ENCODE measurements at regions of chr6 and their contacts with region 1.

Region 1: DNA sequence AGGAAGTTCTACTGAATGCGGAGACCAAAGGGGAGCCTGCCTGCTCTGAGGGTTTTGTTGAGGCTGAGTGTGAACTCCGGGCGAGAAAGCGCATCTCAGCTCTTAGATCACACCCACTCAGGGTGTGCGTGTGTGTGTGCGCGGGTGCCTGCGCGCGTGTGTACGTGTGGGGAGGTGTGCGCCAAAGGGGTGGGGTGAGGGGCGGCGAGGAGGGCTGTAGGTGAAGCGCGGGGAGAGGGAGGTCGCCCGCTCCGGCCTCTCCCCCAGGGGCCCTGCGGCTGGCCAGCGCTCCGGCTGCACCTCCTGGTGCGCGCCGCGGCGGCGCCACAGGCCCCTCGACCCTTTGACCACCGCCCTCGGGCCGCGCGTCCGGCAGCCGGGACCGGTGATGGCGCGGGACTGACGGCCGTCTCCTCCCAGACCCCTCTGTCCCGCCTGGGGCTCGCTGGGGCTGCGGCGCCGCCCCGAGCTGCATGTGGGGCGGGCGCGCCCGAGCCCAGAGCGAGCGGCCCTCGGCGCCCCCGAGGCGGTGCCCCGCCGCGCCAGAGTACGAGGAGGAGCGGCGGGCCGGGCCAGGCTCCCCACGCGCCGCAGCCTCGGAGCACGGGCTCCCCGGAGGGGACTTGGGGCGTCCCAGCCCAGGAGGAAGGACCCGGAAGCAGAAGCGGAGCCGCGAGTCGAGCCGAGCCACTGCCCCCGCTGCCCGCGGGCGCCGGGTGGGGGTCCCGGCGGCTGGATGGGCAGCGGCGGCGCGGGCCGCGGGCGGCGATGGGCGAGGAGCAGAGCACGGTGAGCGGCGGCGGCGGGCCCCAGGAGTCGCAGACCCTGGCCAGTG is at the start of gene RNF217:
- DNase-seq: peak; percentile 27
- ATAC-seq: peak; percentile 50
- H3K4me3 ChIP-seq: peak within 1 kb of the TSS; percentile 76
- H3K27ac ChIP-seq: peak within 1 kb of the TSS; percentile 28
- H3K4me1 ChIP-seq: peaks cover 37% of the 10 kb centered on the region
- H3K27me3 ChIP-seq: no peaks in the 10 kb centered on the region
- CTCF ChIP-seq: no peak
- total RNA-seq, gene RNF217: 4.5 and 7.7 TPM in 2 replicates

Region 2: GRCh38 chr6:124903791-124904190 is 58.2 kb before region 1 on chr6:
- CTCF ChIA-PET with region 1: no interaction called
- POLR2A ChIA-PET with region 1: no interaction called
- intact Hi-C with region 1: no loop called
- DNase-seq: no peak
- ATAC-seq: no peak
- H3K4me3 ChIP-seq: no peak overlapping the region
- H3K27ac ChIP-seq: no peak overlapping the region
- H3K4me1 ChIP-seq: no peaks in the 10 kb centered on the region
- H3K27me3 ChIP-seq: no peaks in the 10 kb centered on the region
- CTCF ChIP-seq: no peak

Region 3: GRCh38 chr6:124995131-124995530 is 33.1 kb after region 1 on chr6:
- CTCF ChIA-PET with region 1: no interaction called
- POLR2A ChIA-PET with region 1: no interaction called
- intact Hi-C with region 1: loop called (anchors 1 kb)
- DNase-seq: peak; percentile 12
- ATAC-seq: peak; percentile 76
- H3K4me3 ChIP-seq: no peak overlapping the region
- H3K27ac ChIP-seq: no peak overlapping the region
- H3K4me1 ChIP-seq: peaks cover 39% of the 10 kb centered on the region
- H3K27me3 ChIP-seq: no peaks in the 10 kb centered on the region
- CTCF ChIP-seq: no peak

Region 4: DNA sequence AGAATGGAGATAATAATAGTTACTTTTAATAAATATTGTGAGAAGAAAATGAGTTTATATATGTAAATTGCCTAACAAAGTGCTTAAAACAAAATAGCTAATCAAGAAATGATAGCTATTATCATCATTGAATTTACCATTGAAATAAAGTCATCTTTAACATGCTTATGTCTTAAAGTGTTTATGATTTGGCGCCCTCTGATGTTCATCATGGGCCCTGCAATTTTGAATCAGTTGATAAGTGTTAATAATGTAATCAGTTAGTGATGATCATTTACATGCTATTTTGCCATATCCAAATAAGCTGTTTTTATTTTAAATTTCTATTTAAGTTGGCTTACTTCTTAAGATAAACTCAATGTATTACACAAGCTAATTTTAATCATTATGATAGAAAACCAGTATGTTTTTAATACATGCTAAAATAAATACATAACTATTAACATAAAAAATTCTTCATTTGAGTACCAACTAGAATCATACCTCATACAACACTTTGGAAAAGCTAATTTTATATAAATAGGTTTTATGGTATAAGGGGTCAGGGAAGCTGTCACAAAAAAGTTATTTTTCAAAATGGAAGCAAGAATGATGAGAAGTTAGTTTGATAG is 152.4 kb after region 1 on chr6:
- CTCF ChIA-PET with region 1: interaction called, 3 read pairs
- POLR2A ChIA-PET with region 1: no interaction called
- intact Hi-C with region 1: loop called (anchors 2 kb)
- DNase-seq: peak; percentile 74
- ATAC-seq: no peak
- H3K4me3 ChIP-seq: no peak overlapping the region
- H3K27ac ChIP-seq: no peak overlapping the region
- H3K4me1 ChIP-seq: no peaks in the 10 kb centered on the region
- H3K27me3 ChIP-seq: no peaks in the 10 kb centered on the region
- CTCF ChIP-seq: peak; percentile 84

Region 5: DNA sequence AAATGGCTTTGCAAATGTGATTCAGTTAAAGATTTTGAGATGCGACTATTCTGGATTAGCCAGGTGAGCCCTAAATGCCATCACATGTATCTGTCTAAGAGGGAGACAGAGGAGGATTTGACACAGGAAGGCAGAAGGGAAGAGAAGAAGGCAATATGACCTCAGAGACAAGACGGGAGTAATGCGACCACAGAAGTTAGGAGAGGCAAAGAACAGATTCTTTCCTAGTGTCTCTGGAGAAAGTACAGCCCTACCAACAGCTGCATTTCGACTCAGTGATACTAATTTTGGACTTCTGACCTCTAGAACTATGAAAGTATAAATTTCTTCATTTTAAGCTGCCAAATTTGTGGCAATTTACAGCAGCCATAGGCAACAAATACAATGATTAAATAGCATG is 167.4 kb after region 1 on chr6:
- CTCF ChIA-PET with region 1: no interaction called
- POLR2A ChIA-PET with region 1: no interaction called
- intact Hi-C with region 1: no loop called
- DNase-seq: no peak
- ATAC-seq: no peak
- H3K4me3 ChIP-seq: no peak overlapping the region
- H3K27ac ChIP-seq: no peak overlapping the region
- H3K4me1 ChIP-seq: peaks cover 3% of the 10 kb centered on the region
- H3K27me3 ChIP-seq: no peaks in the 10 kb centered on the region
- CTCF ChIP-seq: no peak

Measured in PC-3 (cell line).